Mammary epithelial cell (primary cell): ENCODE measurements at regions of chr12 and their contacts with region 1.

Region 1: DNA sequence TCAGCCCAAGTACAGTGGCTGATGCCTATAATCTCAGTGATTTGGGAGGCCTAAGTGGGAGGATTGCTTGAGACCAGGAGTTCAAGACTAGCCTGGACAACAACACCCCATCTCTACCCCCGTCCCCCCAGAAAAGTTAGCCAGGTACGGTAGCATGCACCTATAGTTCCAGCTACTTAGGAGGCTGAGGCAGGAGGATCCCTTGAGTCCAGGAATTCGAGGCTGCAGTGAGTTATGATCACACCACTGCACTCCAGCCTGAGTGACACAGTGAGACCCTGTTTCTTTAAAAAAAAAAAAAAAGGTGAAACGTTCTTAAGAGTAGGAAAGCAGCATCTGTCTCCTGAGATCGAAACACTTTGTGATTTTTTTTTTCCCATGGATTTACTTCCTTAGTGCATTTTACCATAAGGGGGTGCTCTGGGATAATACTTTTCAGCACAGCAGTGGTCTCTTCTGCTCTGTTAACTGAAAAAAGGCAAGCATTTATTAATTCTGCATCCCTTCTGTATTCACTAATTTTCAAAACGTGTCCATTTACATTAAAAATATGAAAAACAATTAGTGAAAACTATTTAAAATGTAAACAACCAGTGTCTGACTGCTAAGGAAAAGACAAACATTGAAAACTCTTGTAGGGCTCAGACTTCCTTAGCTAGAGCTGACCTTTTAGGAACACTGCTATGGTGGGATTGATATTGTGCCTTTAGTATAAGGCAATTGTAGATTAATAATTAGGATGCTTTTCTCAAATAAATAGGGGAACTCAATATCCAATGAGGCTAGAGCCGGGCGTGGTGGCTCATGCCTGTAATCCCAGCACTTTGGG is 31.2 kb upstream of the USP44 start:
- DNase-seq: peak; percentile 23
- H3K4me3 ChIP-seq: no peak overlapping the region
- H3K27ac ChIP-seq: no peak overlapping the region
- H3K4me1 ChIP-seq: no peaks in the 10 kb centered on the region
- H3K27me3 ChIP-seq: no peaks in the 10 kb centered on the region
- CTCF ChIP-seq: peak; percentile 45 to 53

Region 2: GRCh38 chr12:95037906-95038305 is 544.5 kb before region 1 on chr12:
- CTCF ChIA-PET with region 1: no interaction called
- dilution Hi-C with region 1: no loop called
- in situ Hi-C with region 1: no loop called
- intact Hi-C with region 1: no loop called
- DNase-seq: no peak
- H3K4me3 ChIP-seq: no peak overlapping the region
- H3K27ac ChIP-seq: no peak overlapping the region
- H3K4me1 ChIP-seq: no peaks in the 10 kb centered on the region
- H3K27me3 ChIP-seq: no peaks in the 10 kb centered on the region
- CTCF ChIP-seq: no peak

Region 3: DNA sequence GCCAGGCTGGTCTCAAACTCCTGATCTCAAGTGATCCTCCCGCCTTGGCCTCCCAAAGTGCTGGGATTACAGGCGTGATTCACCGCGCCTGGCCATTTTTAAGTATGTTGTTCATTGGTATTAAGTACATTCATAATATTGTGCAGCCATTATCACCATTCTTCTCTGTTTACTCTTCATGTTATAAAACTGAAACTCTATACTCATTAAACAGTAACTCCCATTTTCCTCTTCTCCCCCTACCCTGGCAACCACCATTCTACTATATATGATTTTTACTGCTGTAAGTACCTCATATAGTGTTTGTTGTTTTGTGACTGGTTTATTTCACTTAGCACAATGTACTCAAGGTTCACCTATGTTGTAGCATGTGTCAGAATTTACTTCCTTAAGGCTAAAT is 85.4 kb before region 1 on chr12:
- CTCF ChIA-PET with region 1: no interaction called
- dilution Hi-C with region 1: no loop called
- in situ Hi-C with region 1: no loop called
- intact Hi-C with region 1: no loop called
- DNase-seq: no peak
- H3K4me3 ChIP-seq: no peak overlapping the region
- H3K27ac ChIP-seq: no peak overlapping the region
- H3K4me1 ChIP-seq: no peaks in the 10 kb centered on the region
- H3K27me3 ChIP-seq: no peaks in the 10 kb centered on the region
- CTCF ChIP-seq: no peak

Region 4: GRCh38 chr12:95721350-95721749 is 138.9 kb after region 1 on chr12:
- CTCF ChIA-PET with region 1: no interaction called
- dilution Hi-C with region 1: no loop called
- in situ Hi-C with region 1: no loop called
- intact Hi-C with region 1: loop called (anchors 5 kb)
- DNase-seq: peak; percentile 71
- H3K4me3 ChIP-seq: no peak overlapping the region
- H3K27ac ChIP-seq: no peak overlapping the region
- H3K4me1 ChIP-seq: peaks cover 5% of the 10 kb centered on the region
- H3K27me3 ChIP-seq: no peaks in the 10 kb centered on the region
- CTCF ChIP-seq: peak in 1 of 2 donors; percentile 33

Region 5: GRCh38 chr12:95739561-95740313 is 157.3 kb after region 1 on chr12:
- CTCF ChIA-PET with region 1: no interaction called
- dilution Hi-C with region 1: no loop called
- in situ Hi-C with region 1: no loop called
- intact Hi-C with region 1: loop called (anchors 5 kb)
- DNase-seq: no peak
- H3K4me3 ChIP-seq: no peak overlapping the region
- H3K27ac ChIP-seq: no peak overlapping the region
- H3K4me1 ChIP-seq: peaks cover 3% of the 10 kb centered on the region
- H3K27me3 ChIP-seq: no peaks in the 10 kb centered on the region
- CTCF ChIP-seq: no peak